Caco-2 (cell line): ENCODE measurements at regions of chr3 and their contacts with region 1.

Region 1: GRCh38 chr3:36648241-36649034 is 115.9 kb downstream of the DCLK3 start:
- DNase-seq: peak in 1 of 2 experiments; percentile 37
- H3K4me3 ChIP-seq: no peak overlapping the region
- H3K4me3 Mint-ChIP-seq: no peak overlapping the region
- H3K27ac Mint-ChIP-seq: peak overlapping the region; percentile 9
- H3K4me1 ChIP-seq: peaks cover 14% of the 10 kb centered on the region; the same call in 1 of the 2 replicates
- H3K4me1 Mint-ChIP-seq: peaks cover 18% of the 10 kb centered on the region
- H3K27me3 ChIP-seq: no peaks in the 10 kb centered on the region
- H3K27me3 Mint-ChIP-seq: no peaks in the 10 kb centered on the region
- CTCF ChIP-seq: no peak

Region 2: GRCh38 chr3:36193448-36193847 is 455.0 kb before region 1 on chr3:
- CTCF ChIA-PET with region 1: no interaction called
- POLR2A ChIA-PET with region 1: no interaction called
- intact Hi-C with region 1: no loop called
- DNase-seq: no peak
- H3K4me3 ChIP-seq: no peak overlapping the region
- H3K4me3 Mint-ChIP-seq: no peak overlapping the region
- H3K27ac Mint-ChIP-seq: no peak overlapping the region
- H3K4me1 ChIP-seq: no peaks in the 10 kb centered on the region
- H3K4me1 Mint-ChIP-seq: peaks cover 8% of the 10 kb centered on the region
- H3K27me3 ChIP-seq: no peaks in the 10 kb centered on the region
- H3K27me3 Mint-ChIP-seq: peaks cover 26% of the 10 kb centered on the region
- CTCF ChIP-seq: no peak

Region 3: GRCh38 chr3:36677331-36678007 is 29.0 kb after region 1 on chr3:
- CTCF ChIA-PET with region 1: no interaction called
- POLR2A ChIA-PET with region 1: no interaction called
- intact Hi-C with region 1: loop called (anchors 1 kb)
- DNase-seq: peak; percentile 51 to 61
- H3K4me3 ChIP-seq: no peak overlapping the region
- H3K4me3 Mint-ChIP-seq: no peak overlapping the region
- H3K27ac Mint-ChIP-seq: peak overlapping the region; percentile 32
- H3K4me1 ChIP-seq: no peaks in the 10 kb centered on the region
- H3K4me1 Mint-ChIP-seq: peaks cover 8% of the 10 kb centered on the region
- H3K27me3 ChIP-seq: no peaks in the 10 kb centered on the region
- H3K27me3 Mint-ChIP-seq: no peaks in the 10 kb centered on the region
- CTCF ChIP-seq: no peak